Left cardiac atrium (tissue), 4 donors: ENCODE measurements at regions of chr16 and their contacts with region 1.

Region 1: DNA sequence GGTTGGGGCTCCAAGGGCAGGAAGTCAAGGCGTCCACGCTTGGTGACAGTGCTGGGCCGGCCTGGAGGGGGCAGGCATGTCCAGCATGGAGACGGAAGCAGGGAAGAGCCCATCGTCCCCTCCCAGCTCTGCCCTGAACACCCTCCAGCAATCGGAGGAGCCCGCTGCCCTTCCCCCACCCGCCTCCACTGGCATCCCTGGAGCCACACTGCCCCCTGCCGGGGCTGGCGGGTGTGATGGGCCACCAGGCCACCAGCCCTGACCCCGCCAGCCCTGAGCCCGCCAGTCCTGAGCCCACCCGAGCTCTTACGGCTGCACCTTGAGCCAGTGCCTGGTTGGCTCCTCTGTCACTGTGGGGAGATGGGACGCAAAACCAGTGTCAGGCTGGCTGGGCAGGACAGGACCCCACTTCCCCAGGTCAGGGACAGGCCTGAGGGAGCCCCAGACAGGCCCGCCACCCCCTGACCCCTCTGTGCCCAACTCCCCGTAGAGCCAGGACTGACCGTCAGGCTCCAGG is 4.1 kb upstream of the CDH15 start:
- DNase-seq: peak; percentile 86
- ATAC-seq: peak; percentile 57 to 58

Region 2: DNA sequence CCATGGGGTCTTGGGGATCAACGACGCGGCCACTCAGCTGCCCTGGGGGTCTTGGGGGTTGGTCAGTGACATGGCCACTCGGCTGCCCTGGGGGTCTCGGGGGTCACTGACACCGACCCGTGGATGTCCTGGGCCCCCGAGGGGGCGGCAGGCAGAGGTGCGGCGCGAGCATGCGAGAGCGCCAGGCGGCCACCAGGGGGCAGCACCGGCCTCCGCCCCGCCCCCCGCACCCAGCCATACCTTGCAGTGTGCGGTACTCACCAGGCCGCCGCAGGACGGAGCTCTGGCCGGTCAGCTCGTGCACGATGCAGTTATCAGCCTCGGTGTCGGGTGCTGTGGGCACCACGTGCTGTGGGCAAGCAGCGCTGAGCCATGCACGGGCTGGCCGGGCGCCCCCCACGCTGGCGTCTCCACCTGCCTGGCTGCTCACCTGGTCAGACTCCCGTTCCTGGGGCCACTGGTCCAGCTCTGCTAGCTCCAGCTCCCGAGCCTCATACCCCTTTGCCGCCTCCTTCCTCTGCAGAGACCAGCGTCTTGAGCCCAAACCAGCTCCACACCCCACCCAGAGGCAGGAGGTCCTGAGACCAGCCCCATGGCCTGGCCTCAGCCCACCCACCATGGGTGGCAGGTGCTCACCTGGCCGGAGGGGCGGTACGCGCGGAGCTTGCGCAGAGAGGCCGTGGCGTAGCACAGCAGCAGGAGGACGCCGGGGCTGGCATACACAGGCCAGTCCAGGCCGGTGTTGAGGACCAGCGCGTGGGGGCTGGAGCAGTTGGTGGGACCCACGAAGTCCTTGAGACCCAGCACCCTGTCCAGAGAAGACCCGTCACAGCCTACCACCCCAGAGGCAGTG is 430.0 kb before region 1 on chr16:
- intact Hi-C with region 1: loop called (anchors 5 kb)
- DNase-seq: peak; percentile 76
- ATAC-seq: peak; percentile 80 to 81

Region 3: GRCh38 chr16:88754912-88755744 is 412.4 kb before region 1 on chr16:
- intact Hi-C with region 1: loop called in 1 of 2 experiments (anchors 5 kb)
- DNase-seq: no peak
- ATAC-seq: peak in 1 of 2 donors; percentile 21

Region 4: GRCh38 chr16:88811769-88812512 is 355.5 kb before region 1 on chr16 and contains the start of gene APRT:
- intact Hi-C with region 1: loop called (anchors 2 to 10 kb)
- DNase-seq: peak; percentile 94
- ATAC-seq: peak; percentile 93 to 95
- total RNA-seq, gene APRT: 63.8 to 64.2 TPM